ENCODE measurements at regions of chr9 and their contacts with region 1.

Region 1: DNA sequence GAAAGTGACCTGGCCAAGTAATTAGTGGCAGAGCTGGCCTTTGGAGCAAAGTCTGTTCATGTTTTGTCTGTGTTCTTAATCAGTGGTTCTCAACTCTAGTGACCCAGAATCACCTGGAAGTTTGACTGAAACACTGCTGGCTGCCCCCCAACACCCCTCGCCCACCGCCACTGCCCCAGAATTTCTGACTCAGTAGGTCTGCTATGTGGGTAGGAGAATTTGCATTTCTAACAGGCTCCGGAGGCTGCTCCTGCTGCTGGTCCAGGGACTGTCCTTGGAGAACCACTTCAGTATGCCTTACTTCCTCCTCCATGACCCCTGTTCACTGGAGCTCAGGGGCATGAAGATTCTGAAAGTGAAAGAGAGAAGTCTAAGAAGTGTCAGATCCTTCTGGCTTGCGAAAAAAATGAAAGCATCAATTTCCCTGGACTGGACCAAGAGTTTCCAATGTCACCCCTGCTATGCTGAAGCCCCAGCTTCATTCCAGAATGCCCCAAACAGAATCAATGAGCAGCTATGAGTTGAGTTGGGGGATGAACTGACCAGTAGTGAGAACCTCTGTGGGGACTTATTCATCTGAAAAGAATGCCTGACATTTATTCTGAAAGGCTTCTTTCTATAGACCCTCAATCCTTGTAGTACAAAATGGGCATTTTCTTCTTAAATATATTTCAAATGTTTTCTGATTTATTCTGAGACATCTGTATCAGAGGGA is 20.8 kb upstream of the COL15A1 start:
- DNase-seq: no peak
- H3K4me3 Mint-ChIP-seq: no peak overlapping the region
- H3K27ac Mint-ChIP-seq: no peak overlapping the region
- H3K4me1 Mint-ChIP-seq: no peaks in the 10 kb centered on the region
- H3K27me3 Mint-ChIP-seq: peaks cover 4% of the 10 kb centered on the region

Region 2: DNA sequence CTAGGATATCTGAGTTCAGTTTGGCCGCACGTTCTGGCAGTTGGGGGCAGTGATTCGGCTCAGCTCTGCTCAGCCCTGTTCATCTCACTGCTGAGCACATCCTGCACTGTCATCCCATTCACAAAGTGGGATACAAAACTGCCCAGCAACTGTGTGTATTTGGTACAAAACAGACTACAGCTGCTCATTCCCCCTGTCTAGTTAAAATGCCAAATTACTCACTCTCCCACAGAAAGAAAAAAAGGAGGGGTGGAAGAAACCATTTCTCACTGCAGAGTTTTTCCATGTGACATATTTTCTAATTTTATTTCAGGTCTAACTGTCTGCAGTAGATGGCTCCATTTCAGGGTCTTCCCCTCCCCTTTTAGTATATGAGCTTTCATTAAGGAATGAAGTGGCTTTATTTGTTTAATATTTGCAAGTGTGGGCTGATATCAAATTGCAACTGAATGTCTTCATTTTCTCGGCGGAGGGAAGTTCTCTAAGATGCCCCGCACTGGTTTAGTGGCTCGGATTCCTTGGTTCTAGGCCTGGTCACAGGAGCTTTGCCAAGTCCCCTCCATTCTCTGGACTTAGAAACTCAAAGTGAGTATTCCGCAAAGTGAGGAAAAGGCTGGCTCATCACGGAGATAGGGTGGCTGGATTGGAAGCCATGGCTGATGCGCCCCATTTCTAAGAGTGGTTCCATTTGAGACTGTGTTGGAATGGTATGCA is 35.5 kb after region 1 on chr9:
- CTCF ChIA-PET with region 1: no interaction called
- POLR2A ChIA-PET with region 1: no interaction called
- intact Hi-C with region 1: loop called (anchors 5 kb)
- DNase-seq: no peak
- H3K4me3 Mint-ChIP-seq: no peak overlapping the region
- H3K27ac Mint-ChIP-seq: no peak overlapping the region
- H3K4me1 Mint-ChIP-seq: no peaks in the 10 kb centered on the region
- H3K27me3 Mint-ChIP-seq: peaks cover 6% of the 10 kb centered on the region

Measured in activated CD4-positive, alpha-beta memory T cell treated with anti-CD3 and anti-CD28 coated beads for 36 hours (primary cell).